ENCODE measurements at regions of chr18 and their contacts with region 1.

Region 1: GRCh38 chr18:58781627-58782194 is 83.0 kb upstream of the ZNF532 start:
- DNase-seq: no peak
- ATAC-seq: peak; percentile 91

Region 2: GRCh38 chr18:58221060-58221725 is 560.5 kb before region 1 on chr18:
- intact Hi-C with region 1: no loop called
- DNase-seq: no peak
- ATAC-seq: no peak

Region 3: DNA sequence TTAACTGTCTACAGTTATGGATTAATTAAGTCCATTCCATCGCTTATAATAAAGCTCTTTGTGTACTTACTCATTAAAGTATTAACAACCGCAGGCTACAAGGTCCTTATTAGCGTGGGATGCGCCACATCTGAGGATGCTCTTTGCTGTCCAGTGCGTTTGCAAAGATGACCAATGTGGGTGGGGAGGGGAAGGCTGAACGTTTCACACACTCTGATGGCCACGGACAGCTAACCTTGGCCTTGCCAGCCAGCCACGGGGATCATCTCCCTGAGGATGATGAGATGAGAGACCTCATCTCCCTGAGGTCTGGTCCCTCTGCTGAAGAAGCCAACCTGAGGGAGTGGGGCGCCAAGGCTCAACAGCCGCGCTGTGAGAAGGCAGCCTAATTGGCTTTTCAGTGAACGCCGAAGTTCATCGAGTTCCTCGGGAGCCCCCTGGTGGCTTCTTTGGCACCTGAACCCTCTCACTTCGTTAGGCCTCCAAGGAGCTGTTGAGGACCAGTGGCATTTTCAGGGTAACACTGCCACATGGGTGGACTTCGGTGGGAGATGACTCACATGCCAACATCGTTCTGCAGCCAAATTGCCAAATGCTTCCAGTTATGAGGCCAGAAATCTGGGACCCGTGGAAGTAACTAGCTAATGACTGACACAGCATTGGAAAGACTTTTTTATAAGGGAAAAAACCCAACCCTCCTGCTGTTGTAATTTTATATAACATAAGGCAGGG is 288.6 kb after region 1 on chr18:
- intact Hi-C with region 1: loop called (anchors 1 kb)
- DNase-seq: peak; percentile 86
- ATAC-seq: peak; percentile 80

Measured in Right ventricle myocardium inferior (tissue), 1 donor.